Activated T-helper 2 cell treated with anti-CD3 and anti-CD28 coated beads, Interferon-gamma antibody, Interleukin-2, Interleukin-4, amounts not matched to agents 10 μg/mL and 5 μg/mL and 100 μg/mL, durations not matched to agents 14 hours and 24 hours and 36 hours (primary cell): ENCODE measurements at regions of chr7 and their contacts with region 1.

Region 1: GRCh38 chr7:155702616-155703015 is 58.2 kb downstream of the RBM33 start:
- DNase-seq: no peak
- H3K4me3 Mint-ChIP-seq: no peak overlapping the region
- H3K27ac Mint-ChIP-seq: peak overlapping the region; percentile 66
- H3K4me1 Mint-ChIP-seq: peaks cover 34% of the 10 kb centered on the region
- H3K27me3 Mint-ChIP-seq: no peaks in the 10 kb centered on the region

Region 2: GRCh38 chr7:155524018-155524616 is 178.5 kb before region 1 on chr7:
- intact Hi-C with region 1: no loop called
- DNase-seq: no peak
- H3K4me3 Mint-ChIP-seq: no peak overlapping the region
- H3K27ac Mint-ChIP-seq: no peak overlapping the region
- H3K4me1 Mint-ChIP-seq: no peaks in the 10 kb centered on the region
- H3K27me3 Mint-ChIP-seq: peaks cover 21% of the 10 kb centered on the region

Region 3: DNA sequence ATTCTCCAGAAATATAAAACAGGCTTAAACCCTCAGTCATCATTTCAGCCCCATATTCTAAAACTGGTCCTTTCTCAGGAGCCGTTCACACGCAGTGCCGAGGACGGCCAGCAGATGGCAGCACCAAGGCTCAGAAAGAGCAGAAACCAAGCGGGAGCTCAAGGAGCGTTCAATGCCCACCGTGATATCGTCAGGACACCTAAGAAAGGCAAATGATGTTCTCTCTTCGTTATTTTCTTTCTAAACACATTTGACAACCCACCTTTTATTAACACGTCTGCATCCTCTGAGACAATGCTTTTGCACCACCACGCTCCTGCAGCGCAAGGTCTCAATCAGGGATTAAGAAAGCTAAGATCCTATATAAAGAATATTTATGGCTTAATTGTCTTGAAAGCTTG is 103.8 kb before region 1 on chr7:
- intact Hi-C with region 1: loop called (anchors 10 kb)
- DNase-seq: peak; percentile 72
- H3K4me3 Mint-ChIP-seq: no peak overlapping the region
- H3K27ac Mint-ChIP-seq: no peak overlapping the region
- H3K4me1 Mint-ChIP-seq: peaks cover 10% of the 10 kb centered on the region
- H3K27me3 Mint-ChIP-seq: peaks cover 32% of the 10 kb centered on the region

Region 4: DNA sequence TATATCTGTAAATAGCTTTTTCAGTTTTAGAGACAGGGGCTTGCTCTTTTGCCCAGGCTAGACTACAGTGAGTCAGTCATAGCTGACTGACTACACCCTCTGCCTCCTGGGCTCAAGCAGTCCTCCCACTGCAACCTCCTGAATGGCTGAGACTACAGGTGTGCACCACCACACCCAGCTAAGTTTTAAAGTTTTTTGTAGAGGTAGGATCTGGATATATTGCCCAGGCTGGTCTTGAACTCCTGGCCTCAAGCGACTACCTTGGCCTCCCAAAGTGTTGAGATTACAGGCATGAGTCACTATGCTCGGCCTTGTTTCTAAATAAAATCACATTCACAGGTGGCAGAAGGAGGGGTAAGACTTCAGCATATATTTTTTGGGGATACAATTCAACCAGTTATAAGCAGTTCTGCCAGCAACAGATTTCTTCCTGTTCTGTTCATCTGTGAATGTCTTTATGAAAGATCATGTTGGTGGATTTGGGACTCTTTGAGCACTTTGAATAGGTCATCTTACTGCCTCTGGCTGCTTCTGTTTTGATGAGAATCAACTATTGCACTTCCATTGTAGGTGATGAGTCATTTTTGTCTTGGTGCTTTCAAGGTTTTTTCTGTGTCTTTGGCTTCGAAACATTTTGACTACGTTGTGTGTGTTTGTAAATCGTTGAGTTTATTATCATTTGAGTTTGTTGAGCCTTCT is 42.4 kb before region 1 on chr7:
- intact Hi-C with region 1: loop called (anchors 1 kb)
- DNase-seq: no peak
- H3K4me3 Mint-ChIP-seq: no peak overlapping the region
- H3K27ac Mint-ChIP-seq: peak overlapping the region; percentile 95
- H3K4me1 Mint-ChIP-seq: peaks cover 51% of the 10 kb centered on the region
- H3K27me3 Mint-ChIP-seq: no peaks in the 10 kb centered on the region

Region 5: GRCh38 chr7:155738652-155739537 is 36.3 kb after region 1 on chr7:
- intact Hi-C with region 1: no loop called
- DNase-seq: peak; percentile 46
- H3K4me3 Mint-ChIP-seq: peak overlapping the region; percentile 51
- H3K27ac Mint-ChIP-seq: peak overlapping the region; percentile 78
- H3K4me1 Mint-ChIP-seq: peaks cover 74% of the 10 kb centered on the region
- H3K27me3 Mint-ChIP-seq: no peaks in the 10 kb centered on the region

Region 6: GRCh38 chr7:156220078-156220605 is 517.5 kb after region 1 on chr7:
- intact Hi-C with region 1: no loop called
- DNase-seq: no peak
- H3K4me3 Mint-ChIP-seq: no peak overlapping the region
- H3K27ac Mint-ChIP-seq: no peak overlapping the region
- H3K4me1 Mint-ChIP-seq: no peaks in the 10 kb centered on the region
- H3K27me3 Mint-ChIP-seq: no peaks in the 10 kb centered on the region